ENCODE measurements at regions of chr15 and their contacts with region 1.

Region 1: DNA sequence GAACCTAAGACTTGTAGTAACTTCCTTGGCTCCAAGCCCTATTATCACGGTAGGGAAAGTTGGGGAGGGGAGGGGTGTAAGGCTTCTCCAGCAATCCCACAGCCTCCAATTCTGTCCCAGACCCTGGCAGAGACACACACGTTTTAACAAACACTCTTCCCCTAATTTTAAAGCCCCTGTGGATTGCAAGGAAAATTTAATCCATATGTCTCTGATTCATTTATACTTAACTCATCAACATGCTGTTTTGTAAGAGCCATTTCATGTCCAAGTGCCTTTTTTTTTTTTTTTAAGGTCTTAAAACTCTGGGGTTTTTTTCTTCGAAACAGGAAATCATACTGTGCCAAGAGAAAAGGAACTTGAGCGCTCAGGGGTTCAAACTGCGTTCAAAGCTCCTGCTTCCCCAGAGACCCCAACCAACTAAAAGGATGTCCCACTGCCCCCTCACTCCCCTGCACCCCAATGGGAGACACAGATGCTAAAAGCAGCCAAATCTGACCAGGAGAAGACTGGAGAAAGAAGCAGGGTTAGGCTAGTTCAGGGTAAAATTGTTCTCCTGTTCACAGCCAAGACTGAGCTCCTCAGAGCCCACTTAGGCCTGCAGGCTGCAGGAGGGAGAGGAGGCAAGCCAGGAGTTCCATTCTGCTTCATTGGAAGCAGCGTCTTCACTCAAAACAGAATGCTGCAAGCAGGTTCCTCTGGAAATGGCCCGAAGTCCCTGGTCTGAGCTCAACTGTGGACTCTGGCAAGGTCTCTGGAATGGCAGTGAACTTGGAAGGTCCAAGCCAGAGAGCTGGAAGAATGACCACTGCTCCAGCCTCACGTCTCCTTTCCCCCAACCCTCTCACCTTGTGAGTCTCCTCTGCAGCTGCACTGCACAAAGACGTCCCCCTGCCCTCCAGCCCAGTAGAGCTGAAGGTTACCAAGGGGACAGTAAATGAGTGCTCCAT is 172.5 kb downstream of the NTRK3 start:
- DNase-seq: no peak
- ATAC-seq: no peak
- H3K4me3 ChIP-seq: no peak overlapping the region
- H3K27ac ChIP-seq: no peak overlapping the region
- H3K4me1 ChIP-seq: no peaks in the 10 kb centered on the region
- H3K27me3 ChIP-seq: peaks cover 0 to 1% (median 0%) of the 10 kb centered on the region in 3 donors
- CTCF ChIP-seq: no peak

Region 2: DNA sequence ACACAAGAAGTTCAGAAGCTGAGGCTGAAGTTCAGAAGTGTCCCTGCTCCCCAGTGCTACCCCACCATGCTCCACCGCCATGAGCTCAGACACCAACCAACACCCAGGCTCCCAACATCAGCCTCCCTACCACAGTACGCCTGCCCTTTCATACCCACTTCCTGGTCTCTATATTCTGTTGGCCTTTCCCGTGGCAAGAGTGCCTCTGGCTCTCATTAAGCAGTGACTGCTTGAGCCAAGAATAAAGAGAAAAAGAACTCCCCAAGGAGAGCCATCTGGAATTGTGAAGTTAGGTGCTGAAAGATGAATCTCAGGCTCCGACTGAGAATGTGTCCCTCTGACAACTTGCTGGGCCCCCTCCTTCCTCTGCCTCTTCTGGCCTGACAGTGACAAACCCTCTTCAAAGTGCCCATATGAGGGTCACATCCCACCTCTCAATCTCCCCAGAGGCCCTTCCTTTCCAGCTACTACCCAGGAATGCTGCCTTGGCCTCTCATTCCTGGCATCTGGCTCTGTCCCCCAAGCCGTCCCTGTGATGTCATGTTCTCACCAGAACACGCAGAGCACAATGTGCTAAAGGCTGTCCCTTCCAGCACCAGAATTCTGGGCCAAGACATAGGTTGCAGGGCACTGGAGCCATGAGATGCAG is 134.4 kb before region 1 on chr15:
- intact Hi-C with region 1: no loop called
- DNase-seq: no peak
- ATAC-seq: peak in 3 of 4 donors; percentile 36 to 58 (median 46)
- H3K4me3 ChIP-seq: no peak overlapping the region
- H3K27ac ChIP-seq: no peak overlapping the region
- H3K4me1 ChIP-seq: peaks cover 11% of the 10 kb centered on the region
- H3K27me3 ChIP-seq: no peaks in the 10 kb centered on the region
- CTCF ChIP-seq: no peak

Region 3: DNA sequence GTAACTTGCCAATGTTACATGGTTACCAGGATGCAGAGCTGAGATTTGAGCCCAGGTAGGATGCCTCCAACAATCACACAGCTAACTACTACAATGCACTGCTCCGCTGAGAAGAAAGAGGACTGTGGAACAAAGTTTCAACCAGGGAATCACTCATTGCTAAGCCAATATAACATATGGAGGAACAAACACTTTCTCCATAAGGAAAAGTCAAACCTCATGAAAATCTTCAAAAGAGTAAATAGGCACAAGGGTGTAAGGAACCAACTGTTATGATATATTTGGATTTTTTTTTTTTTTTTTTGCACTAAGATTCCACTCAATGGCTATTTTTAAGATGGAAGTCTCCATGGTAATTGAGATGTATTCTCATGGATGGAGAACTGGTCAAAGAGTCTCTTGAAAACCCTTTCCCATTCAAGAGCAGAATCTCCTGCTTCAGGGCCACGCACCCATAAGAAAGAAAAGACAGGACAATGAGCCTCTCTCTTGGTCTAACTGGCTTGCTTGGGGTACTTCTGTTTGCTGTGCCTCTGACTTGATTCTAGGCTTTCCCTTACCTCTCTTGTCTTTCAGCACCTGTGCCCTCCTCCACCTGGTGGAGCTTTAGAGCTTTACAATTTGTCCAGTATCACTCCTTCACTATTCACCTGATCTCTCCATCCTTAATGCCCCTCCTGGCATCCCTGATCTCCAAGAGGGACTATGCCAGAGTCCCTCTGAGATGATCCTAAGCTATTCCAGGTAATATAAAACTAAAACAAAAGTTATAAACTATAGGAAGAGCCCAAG is 80.3 kb before region 1 on chr15:
- intact Hi-C with region 1: loop called in 1 of 2 experiments (anchors 10 kb)
- DNase-seq: no peak
- ATAC-seq: no peak
- H3K4me3 ChIP-seq: no peak overlapping the region
- H3K27ac ChIP-seq: no peak overlapping the region
- H3K4me1 ChIP-seq: peaks cover 9% of the 10 kb centered on the region
- H3K27me3 ChIP-seq: no peaks in the 10 kb centered on the region
- CTCF ChIP-seq: no peak